ENCODE measurements at regions of chr22 and their contacts with region 1.

Region 1: DNA sequence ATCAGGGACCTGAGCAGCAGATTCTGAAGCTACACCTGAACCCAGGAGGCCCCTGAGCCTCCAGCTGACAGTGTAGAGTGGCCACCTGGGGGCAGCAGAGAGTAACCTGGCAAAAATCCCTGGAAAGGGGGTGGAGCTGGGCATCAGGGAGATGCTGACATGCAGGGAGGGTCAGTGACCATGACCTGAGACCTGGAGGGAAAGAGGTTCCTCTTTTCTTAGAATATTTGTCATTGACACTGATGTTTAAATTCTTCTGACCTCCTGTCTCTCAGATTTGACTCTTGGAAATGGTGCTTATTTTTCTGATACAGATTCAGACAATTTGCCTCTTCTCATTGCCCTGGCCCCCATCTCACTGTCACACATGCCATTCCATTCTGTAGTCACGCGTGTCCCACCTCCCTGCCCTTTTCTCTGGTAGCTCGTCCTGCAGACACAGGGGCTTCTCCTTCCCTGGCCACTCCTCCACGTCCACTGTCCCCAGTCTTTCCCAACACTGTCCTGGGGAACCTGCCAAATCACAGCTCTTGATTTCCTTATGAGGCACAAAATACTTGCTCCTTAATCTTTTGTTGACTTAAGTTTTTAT is 117.2 kb upstream of the IGLL5 start:
- DNase-seq: peak; percentile 54
- ATAC-seq: peak; percentile 53
- H3K4me3 Mint-ChIP-seq: no peak overlapping the region
- H3K27ac Mint-ChIP-seq: no peak overlapping the region
- H3K4me1 Mint-ChIP-seq: peaks cover 3% of the 10 kb centered on the region
- H3K27me3 Mint-ChIP-seq: peaks cover 10% of the 10 kb centered on the region

Region 2: DNA sequence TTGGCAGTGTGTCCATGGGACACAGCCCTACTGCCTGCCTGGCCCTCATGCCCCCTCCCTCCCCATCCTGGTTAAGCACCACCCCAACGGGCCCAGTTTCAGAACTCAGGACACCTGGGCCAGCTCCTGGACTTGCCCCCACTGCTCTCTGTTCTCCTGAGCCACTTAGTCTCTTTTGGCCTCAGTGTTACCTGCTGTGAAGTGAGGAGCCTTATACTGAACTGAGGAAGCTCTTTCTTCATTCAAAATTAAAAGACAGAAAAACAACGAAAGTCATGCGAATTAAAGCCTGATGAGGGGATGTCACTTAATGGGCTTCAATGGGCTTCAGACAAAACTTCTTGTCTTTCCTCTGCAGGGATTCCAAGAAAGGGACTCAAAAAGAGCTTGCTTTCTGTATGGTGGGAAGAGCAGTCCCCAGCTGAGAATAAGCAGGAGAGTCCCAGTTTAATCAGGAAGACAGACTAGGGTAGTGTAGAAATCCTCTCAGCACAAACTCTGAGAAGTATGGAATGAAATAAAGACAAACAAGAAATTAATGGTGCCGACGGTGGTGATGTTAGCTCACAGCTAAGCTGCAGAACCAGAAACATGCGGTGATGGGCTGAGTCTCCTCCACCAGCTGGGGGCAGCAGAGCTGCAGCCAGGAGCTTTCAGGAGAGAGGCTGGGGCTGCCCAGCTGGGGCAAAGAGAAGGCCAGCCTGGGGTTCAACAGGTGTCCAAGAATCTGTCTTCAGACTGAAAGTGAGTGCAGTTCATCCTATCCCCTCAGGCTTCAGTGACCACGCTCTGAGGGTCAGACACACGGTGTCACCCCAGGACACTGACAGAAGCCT is 24.9 kb before region 1 on chr22:
- CTCF ChIA-PET with region 1: interaction called, 18 read pairs
- DNase-seq: peak; percentile 61
- ATAC-seq: peak; percentile 70
- H3K4me3 Mint-ChIP-seq: no peak overlapping the region
- H3K27ac Mint-ChIP-seq: no peak overlapping the region
- H3K4me1 Mint-ChIP-seq: peaks cover 11% of the 10 kb centered on the region
- H3K27me3 Mint-ChIP-seq: peaks cover 33% of the 10 kb centered on the region

Region 3: GRCh38 chr22:22891139-22891621 is 120.8 kb after region 1 on chr22:
- CTCF ChIA-PET with region 1: no interaction called
- DNase-seq: no peak
- ATAC-seq: no peak
- H3K4me3 Mint-ChIP-seq: no peak overlapping the region
- H3K27ac Mint-ChIP-seq: no peak overlapping the region
- H3K4me1 Mint-ChIP-seq: no peaks in the 10 kb centered on the region
- H3K27me3 Mint-ChIP-seq: peaks cover 64% of the 10 kb centered on the region

Region 4: DNA sequence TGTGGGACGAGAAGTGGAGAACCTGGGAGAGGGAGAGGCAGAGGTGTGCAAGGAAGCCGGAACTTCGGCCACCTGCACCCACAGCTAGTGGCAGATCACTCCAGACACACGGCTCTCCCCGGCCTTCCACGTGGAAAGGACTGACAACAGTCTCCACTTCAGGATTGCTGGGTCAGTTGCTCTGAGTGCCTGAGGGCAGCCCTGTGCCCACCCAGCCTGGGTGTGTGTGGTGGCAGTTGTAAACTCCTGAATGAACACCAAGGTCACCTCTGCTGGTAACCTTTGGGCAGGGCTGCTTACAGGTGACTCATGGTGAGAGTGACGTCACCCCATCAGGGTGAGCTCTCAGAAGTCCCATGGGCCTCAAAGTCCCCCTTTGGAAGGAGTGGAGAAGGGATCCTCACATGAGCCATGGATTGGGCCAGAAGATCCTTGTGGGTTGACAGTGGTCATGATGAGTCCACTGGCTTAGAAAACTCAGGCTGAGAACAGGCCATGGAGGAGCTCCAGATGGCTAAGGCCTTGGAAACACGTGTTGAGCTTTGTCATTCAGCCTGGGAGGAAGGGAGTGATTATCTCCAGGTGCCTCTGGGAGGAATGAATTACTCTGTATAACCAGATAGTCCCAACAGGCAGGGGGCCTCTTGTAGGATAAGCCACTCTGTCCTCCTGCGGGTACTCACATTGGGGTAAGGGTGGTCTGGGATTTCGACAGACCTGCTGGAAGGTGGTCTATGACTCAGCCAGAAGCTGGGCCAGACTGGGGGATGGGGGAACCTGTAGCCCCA is 481.3 kb after region 1 on chr22:
- CTCF ChIA-PET with region 1: no interaction called
- DNase-seq: no peak
- ATAC-seq: peak; percentile 57
- H3K4me3 Mint-ChIP-seq: no peak overlapping the region
- H3K27ac Mint-ChIP-seq: no peak overlapping the region
- H3K4me1 Mint-ChIP-seq: peaks cover 33% of the 10 kb centered on the region
- H3K27me3 Mint-ChIP-seq: no peaks in the 10 kb centered on the region

Measured in activated CD8-positive, alpha-beta memory T cell treated with anti-CD3 and anti-CD28 coated beads, Interleukin-2, amount 10 ng/mL, durations not matched to agents 7 days and 5 days (primary cell).